Prostate gland (tissue), 2 donors: ENCODE measurements at regions of chr10 and their contacts with region 1.

Region 1: DNA sequence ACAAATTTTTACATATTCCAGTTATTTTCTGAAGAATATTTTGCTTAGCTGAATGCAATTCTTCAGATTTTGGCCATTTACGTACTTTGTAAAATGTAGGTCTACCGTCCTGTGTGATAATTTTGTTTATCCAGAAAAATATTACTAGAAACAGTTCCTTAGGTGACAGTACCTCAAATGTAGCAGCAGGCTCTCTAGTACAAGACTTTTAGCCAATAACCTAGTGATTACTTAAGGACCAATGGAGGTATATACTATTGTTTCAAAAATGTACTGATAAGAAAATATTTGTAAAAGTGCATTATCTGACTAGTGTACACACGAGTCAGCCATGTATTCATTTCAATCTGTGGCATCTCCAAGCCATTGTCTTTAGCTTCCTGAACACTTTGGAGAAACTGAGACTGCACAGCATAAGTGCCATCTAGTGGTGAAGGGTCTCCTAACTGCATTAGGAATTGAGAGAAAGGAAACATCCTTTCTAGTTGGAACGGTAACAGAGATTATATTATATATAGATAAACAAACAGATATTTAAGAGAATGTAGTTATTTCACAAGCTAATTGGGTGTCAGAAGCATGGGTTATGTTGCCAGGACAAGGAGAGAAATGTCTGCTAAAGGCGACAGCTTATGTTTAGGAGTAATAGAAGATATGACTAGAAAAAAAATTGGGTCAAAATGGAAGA is 23.7 kb downstream of the RTKN2 start:
- DNase-seq: peak; percentile 67
- H3K4me3 ChIP-seq: no peak overlapping the region
- H3K27ac ChIP-seq: no peak overlapping the region
- H3K4me1 ChIP-seq: no peaks in the 10 kb centered on the region
- H3K27me3 ChIP-seq: no peaks in the 10 kb centered on the region
- CTCF ChIP-seq: peak; percentile 65 to 91 (median 86)
- POLR2A ChIP-seq: no peak

Region 2: DNA sequence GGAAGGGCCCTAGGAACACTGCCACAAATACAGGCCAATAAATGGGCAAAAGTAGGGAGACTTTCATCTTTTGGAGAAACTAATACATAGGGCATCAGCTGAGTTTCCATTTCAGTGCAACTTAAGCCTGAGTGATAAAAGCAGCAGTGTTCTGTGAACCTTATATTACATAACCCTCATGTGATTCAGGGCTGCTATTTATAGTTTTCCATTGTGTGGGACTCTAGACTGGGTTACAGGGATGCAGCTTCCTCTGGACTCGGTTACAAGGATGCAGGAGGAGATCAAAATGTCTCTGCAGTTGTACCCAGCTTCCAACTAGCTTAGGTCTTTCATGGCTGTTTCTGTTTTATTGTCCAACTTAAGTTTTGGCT is 1434.1 kb before region 1 on chr10:
- intact Hi-C with region 1: loop called (anchors 5 kb)
- DNase-seq: no peak
- H3K4me3 ChIP-seq: no peak overlapping the region
- H3K27ac ChIP-seq: peak overlapping the region; percentile 14 to 20
- H3K4me1 ChIP-seq: no peaks in the 10 kb centered on the region
- H3K27me3 ChIP-seq: no peaks in the 10 kb centered on the region
- CTCF ChIP-seq: no peak
- POLR2A ChIP-seq: no peak

Region 3: DNA sequence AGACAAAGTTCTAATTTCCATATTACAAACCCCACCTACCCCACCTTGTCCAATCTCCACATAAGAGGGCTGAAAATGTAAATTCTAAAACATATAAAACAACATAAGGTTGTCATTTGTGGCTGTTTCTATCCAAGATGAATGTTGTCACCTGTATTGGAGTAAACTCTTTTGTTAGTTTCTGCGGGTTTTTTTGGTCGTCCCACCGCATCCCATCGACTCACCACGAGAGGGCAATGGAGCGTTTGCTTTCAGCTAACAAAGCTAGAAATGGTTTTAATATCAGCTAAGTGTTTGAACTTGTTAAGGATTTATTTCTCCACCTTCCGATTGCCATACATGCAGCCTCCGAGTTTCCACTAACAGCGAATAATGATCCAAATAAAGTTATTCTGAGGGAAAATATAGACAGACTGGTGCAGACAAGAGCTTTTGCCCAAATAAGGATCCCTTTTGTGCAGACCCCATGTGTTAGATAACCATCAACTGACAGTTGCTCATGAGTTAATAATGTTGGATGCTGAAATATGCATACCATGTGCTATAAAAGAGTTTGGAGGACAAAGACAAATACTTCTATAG is 206.2 kb before region 1 on chr10:
- intact Hi-C with region 1: loop called (anchors 2 kb)
- DNase-seq: peak; percentile 70
- H3K4me3 ChIP-seq: no peak overlapping the region
- H3K27ac ChIP-seq: peak overlapping the region; percentile 54 to 69
- H3K4me1 ChIP-seq: peaks cover 11% of the 10 kb centered on the region
- H3K27me3 ChIP-seq: no peaks in the 10 kb centered on the region
- CTCF ChIP-seq: peak; percentile 70 to 82 (median 80)
- POLR2A ChIP-seq: no peak